Caco-2 (cell line): ENCODE measurements at regions of chr22 and their contacts with region 1.

Region 1: DNA sequence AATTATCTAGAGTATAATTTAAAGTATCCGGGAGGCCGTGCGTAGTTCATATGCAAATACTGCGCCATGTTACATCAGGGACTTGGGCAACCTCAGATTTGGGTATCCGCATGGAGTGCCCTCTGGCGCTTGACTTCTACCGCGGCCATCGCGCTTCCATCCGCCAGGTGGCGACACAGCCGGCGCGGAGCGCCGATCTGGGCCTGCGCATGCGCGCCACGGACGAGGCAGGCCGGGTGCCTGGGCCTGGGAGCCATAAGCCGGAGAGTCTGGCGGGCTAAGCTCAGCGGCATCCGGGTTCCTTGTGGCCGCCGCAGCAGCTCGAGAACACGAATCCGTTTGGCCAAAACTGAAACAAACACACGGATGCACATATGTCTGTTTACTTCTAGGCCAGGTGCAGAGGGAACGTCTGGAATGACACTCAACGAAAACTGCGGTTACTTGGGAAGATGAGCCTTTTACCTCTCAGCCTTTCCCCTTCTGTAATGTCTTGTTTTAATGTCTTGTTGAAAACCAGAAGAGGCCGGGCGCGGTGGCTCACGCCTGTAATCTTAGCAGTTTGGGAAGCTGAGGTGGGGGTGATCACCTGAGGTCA is 21.9 kb downstream of the SNU13 start:
- DNase-seq: peak; percentile 76 to 79
- H3K4me3 ChIP-seq: no peak overlapping the region
- H3K4me3 Mint-ChIP-seq: peak overlapping the region; percentile 47
- H3K27ac Mint-ChIP-seq: peak overlapping the region; percentile 53
- H3K4me1 ChIP-seq: 0 out of 2 replicates have a peak, but pooled peaks cover 4% of the 10 kb centered on the region
- H3K4me1 Mint-ChIP-seq: peaks cover 6% of the 10 kb centered on the region
- H3K27me3 ChIP-seq: no peaks in the 10 kb centered on the region
- H3K27me3 Mint-ChIP-seq: no peaks in the 10 kb centered on the region
- CTCF ChIP-seq: peak; percentile 54 to 70

Region 2: DNA sequence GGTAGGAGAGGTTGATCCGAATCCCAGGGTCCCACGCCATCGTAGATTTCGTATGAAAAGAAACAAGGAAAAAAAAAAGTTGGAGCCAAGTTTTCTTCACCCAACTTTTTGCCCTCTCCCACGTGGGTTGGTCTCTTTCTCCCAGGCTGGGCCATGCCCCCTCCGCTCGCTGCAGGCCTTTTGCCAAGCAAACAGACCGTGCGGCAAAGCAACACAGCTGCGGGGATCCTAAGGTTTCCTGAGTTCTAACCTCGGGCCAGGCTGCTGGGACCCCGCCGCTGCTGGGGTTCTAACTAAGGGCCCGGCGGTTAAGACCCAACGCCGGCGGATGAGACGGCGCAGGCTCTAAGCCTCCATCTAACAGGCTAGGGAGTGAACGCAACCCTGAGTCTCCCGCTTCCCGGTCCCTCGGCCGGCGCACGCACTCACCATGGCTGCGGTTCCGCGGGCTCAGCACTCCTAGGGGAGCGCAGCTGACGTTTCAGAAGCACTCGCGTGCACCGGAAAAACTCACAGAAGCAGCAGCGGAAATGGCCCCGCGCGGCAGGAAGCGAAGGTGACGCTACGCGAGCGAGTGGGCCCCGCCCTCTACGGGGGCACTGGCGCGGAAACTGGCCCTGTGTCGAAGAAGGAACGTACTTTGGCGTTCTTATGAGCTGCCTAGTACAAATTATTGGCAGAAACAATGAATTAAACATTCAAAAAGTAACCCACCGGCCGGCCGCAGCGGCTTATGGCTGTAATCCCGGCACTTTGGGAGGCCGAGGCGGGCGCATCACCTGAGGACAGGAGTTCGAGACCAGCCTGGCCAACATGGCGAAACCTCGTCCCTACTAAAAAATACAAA is 21.8 kb after region 1 on chr22 and contains the start of gene SNU13:
- CTCF ChIA-PET with region 1: interaction called, 4 read pairs
- POLR2A ChIA-PET with region 1: interaction called, 10 read pairs
- intact Hi-C with region 1: no loop called
- DNase-seq: peak; percentile 90 to 91
- H3K4me3 ChIP-seq: peak within 1 kb of the TSS; percentile 67
- H3K4me3 Mint-ChIP-seq: peak within 1 kb of the TSS; percentile 97
- H3K27ac Mint-ChIP-seq: peak within 1 kb of the TSS; percentile 96
- H3K4me1 ChIP-seq: peaks cover 6% of the 10 kb centered on the region; the same call in 1 of the 2 replicates
- H3K4me1 Mint-ChIP-seq: no peaks in the 10 kb centered on the region
- H3K27me3 ChIP-seq: no peaks in the 10 kb centered on the region
- H3K27me3 Mint-ChIP-seq: no peaks in the 10 kb centered on the region
- CTCF ChIP-seq: no peak
- total RNA-seq, gene SNU13: 172 and 187 TPM in 2 replicates